Activated naive CD4-positive, alpha-beta T cell treated with anti-CD3 and anti-CD28 coated beads for 36 hours (primary cell): ENCODE measurements at regions of chr11 and their contacts with region 1.

Region 1: DNA sequence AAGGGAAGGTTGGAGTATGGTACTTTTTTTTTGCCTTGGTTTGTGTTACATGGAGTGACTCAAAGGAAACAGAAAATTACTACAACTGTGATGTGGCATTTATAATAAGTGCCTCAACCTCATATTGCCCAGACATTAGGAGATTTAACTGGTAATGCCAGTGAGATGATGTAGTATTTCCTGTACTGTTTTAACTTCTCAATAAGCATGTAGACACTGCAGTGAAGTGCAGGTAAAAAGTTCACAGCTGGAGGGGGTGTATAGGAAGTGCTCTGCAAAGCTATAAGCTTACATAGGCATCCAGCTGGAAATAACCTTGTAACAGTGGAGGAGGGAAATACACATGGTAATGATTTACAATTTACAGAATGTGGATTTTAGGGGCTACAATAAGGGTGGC is 138.2 kb upstream of the MTMR2 start:
- DNase-seq: peak; percentile 76
- H3K4me3 Mint-ChIP-seq: peak overlapping the region; percentile 13
- H3K27ac Mint-ChIP-seq: peak overlapping the region; percentile 94
- H3K4me1 Mint-ChIP-seq: peaks cover 78% of the 10 kb centered on the region
- H3K27me3 Mint-ChIP-seq: no peaks in the 10 kb centered on the region

Region 2: DNA sequence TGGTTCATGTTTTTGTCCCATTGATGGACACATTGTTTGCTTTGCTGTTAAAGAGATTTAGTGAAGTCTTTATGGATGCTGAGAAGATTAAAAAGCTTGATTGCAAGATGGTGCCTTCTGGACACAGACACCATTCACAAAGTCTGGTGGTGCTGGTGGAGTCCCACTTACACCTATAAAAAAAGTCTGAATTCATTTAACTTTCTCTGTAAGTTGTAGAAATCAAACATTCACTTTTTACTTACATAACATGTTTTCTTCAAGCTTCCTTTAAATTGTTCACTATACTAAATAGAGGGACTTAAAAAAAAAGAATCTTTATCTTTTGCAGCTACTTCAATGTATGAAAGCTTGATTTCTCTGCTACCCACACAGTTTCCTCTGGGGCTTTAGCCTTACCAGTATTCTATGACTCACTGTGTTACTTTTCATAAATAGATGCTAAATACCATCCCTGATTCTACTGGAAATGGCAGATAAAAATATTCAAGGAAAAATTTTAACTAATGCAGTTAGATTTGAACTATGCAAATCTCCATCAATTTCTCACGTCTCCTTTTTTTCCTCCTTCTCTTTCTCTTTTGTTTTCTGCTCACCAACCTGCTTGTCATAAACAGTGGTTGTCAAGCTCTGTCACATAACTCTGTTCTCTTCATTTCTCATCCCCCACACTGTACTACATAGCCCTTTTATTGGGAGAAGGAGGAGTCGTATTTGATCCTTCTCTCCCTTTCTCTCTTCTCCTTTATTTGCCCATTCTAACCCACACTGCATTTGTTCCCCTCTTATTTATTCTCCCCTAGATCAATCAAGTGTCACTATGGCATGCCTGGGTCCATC is 362.3 kb before region 1 on chr11:
- CTCF ChIA-PET with region 1: no interaction called
- intact Hi-C with region 1: loop called (anchors 5 kb)
- DNase-seq: no peak
- H3K4me3 Mint-ChIP-seq: peak overlapping the region; percentile 65
- H3K27ac Mint-ChIP-seq: peak overlapping the region; percentile 92
- H3K4me1 Mint-ChIP-seq: peaks cover 53% of the 10 kb centered on the region
- H3K27me3 Mint-ChIP-seq: no peaks in the 10 kb centered on the region

Region 3: GRCh38 chr11:96023275-96023674 is 38.9 kb before region 1 on chr11:
- CTCF ChIA-PET with region 1: no interaction called
- intact Hi-C with region 1: no loop called
- DNase-seq: no peak
- H3K4me3 Mint-ChIP-seq: no peak overlapping the region
- H3K27ac Mint-ChIP-seq: no peak overlapping the region
- H3K4me1 Mint-ChIP-seq: peaks cover 67% of the 10 kb centered on the region
- H3K27me3 Mint-ChIP-seq: no peaks in the 10 kb centered on the region

Region 4: DNA sequence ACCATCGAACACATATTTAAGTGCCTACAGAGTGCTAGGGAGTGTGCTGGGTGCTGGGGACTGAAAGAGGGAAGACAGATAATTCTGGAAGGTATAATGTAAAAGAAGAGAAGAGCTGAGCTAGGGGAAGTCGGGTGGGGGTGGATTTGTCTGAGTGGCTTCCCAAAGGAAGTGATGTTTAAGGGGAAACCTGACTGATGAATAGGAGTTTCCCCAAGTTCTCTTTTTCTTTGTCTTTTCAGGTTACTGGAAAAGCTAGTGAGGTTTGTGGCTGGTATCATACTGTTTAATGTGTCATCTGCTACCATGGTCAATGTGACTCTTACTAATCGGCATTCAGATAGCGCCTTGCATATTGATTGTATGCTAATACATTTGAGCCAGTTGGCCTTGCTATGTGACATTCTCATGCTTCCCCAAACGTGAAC is 13.4 kb after region 1 on chr11:
- CTCF ChIA-PET with region 1: interaction called, 6 read pairs
- intact Hi-C with region 1: loop called (anchors 1 kb)
- DNase-seq: peak; percentile 63
- H3K4me3 Mint-ChIP-seq: peak overlapping the region; percentile 2
- H3K27ac Mint-ChIP-seq: peak overlapping the region; percentile 93
- H3K4me1 Mint-ChIP-seq: peaks cover 85% of the 10 kb centered on the region
- H3K27me3 Mint-ChIP-seq: no peaks in the 10 kb centered on the region

Region 5: GRCh38 chr11:96149743-96150555 is 87.8 kb after region 1 on chr11:
- CTCF ChIA-PET with region 1: interaction called, 4 read pairs
- intact Hi-C with region 1: loop called (anchors 1 kb)
- DNase-seq: no peak
- H3K4me3 Mint-ChIP-seq: no peak overlapping the region
- H3K27ac Mint-ChIP-seq: no peak overlapping the region
- H3K4me1 Mint-ChIP-seq: peaks cover 59% of the 10 kb centered on the region
- H3K27me3 Mint-ChIP-seq: no peaks in the 10 kb centered on the region

Region 6: GRCh38 chr11:96242971-96243647 is 181.0 kb after region 1 on chr11:
- CTCF ChIA-PET with region 1: interaction called, 3 read pairs
- intact Hi-C with region 1: loop called (anchors 1 kb)
- DNase-seq: peak; percentile 94
- H3K4me3 Mint-ChIP-seq: peak overlapping the region; percentile 84
- H3K27ac Mint-ChIP-seq: peak overlapping the region; percentile 95
- H3K4me1 Mint-ChIP-seq: peaks cover 54% of the 10 kb centered on the region
- H3K27me3 Mint-ChIP-seq: no peaks in the 10 kb centered on the region

Region 7: DNA sequence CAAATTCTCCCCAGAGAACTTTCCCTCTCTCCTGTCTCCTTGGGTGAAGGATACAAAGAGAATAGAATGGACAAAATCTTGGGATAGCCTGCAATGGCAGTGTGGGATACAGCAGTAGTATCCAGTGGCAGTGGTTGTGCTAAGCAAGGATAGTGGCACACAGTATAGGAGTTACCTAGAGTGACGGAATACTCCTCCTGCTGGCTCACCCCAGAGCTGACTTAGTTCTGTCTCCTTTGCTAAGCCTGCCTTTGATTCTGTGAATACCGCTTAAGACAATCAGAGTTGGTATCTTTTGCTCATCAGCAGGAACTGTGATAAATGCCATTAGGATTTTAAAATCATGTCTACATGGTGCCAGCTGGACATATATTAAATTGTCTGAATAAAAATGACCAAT is 732.0 kb after region 1 on chr11:
- CTCF ChIA-PET with region 1: no interaction called
- intact Hi-C with region 1: no loop called
- DNase-seq: no peak
- H3K4me3 Mint-ChIP-seq: no peak overlapping the region
- H3K27ac Mint-ChIP-seq: no peak overlapping the region
- H3K4me1 Mint-ChIP-seq: no peaks in the 10 kb centered on the region
- H3K27me3 Mint-ChIP-seq: no peaks in the 10 kb centered on the region